CD4-positive, alpha-beta T cell (primary cell): ENCODE measurements at regions of chr15 and their contacts with region 1.

Region 1: GRCh38 chr15:64731012-64731806 is 44.2 kb downstream of the RBPMS2 start:
- DNase-seq: peak; percentile 76 to 94 (median 85)
- ATAC-seq: peak; percentile 80
- H3K4me3 ChIP-seq: no peak overlapping the region
- H3K4me3 Mint-ChIP-seq: no peak overlapping the region
- H3K27ac ChIP-seq: no peak overlapping the region
- H3K27ac Mint-ChIP-seq: no peak overlapping the region
- H3K4me1 ChIP-seq: peaks cover 9% of the 10 kb centered on the region
- H3K4me1 Mint-ChIP-seq: peaks cover 8% of the 10 kb centered on the region
- H3K27me3 ChIP-seq: no peaks in the 10 kb centered on the region
- H3K27me3 Mint-ChIP-seq: peaks cover 9% of the 10 kb centered on the region
- CTCF ChIP-seq: peak; percentile 85

Region 2: DNA sequence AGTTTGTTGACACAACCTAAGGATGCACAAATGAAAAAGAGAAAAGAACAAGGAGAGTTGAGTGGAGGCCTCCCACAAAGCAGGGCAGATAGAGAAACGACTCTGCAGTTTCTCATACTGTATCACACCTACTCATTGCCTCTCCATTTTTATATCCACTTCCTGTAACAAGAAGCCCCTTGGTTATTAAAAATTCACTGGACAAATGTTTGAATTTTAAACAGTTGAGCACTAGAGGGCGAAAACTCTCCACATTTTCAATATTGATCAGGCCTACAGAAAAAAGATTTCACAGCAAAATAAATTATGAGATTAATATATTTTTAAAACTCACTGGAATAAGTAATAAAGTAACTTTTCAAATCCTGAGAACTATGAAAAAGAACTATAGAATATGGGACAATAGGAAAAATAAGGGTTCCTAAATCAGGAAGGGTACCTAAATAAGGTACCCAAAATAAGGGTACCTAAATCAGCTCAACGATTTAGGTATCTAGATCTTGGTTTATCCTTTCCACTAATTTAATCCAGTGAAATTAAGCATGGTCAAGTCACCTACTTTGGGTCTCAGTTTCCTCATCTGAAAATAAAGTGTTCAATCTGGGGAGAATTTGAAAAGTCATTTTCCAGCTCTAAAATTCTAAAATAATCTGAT is 521.4 kb before region 1 on chr15:
- CTCF ChIA-PET with region 1: no interaction called
- POLR2A ChIA-PET with region 1: no interaction called
- intact Hi-C with region 1: loop called in 1 of 2 experiments (anchors 5 kb)
- DNase-seq: peak in 3 of 14 experiments; percentile 19 to 27 (median 27)
- ATAC-seq: no peak
- H3K4me3 ChIP-seq: no peak overlapping the region
- H3K4me3 Mint-ChIP-seq: no peak overlapping the region
- H3K27ac ChIP-seq: no peak overlapping the region
- H3K27ac Mint-ChIP-seq: peak overlapping the region; percentile 7
- H3K4me1 ChIP-seq: no peaks in the 10 kb centered on the region
- H3K4me1 Mint-ChIP-seq: no peaks in the 10 kb centered on the region
- H3K27me3 ChIP-seq: no peaks in the 10 kb centered on the region
- H3K27me3 Mint-ChIP-seq: no peaks in the 10 kb centered on the region
- CTCF ChIP-seq: peak; percentile 43

Region 3: DNA sequence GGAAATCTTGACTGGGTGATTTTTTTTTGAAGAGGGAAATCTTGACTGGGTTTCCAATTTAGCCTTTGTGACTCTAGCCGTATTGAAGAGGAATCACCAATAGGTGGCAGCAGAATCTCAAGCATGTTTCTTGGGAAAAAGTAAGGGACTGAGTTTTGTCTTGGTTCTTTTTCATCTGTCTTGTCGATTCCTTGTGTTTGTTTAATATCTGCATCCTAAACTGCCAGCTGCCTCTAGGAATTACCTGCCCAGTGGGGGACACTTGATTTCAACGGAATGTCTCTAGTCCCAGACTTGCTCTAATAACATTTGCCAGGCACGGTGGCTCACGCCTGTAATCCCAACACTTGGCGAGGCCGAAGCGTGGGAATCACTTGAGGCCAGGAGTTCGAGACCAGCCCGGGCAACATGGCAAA is 45.0 kb before region 1 on chr15:
- CTCF ChIA-PET with region 1: interaction called, 42 read pairs
- POLR2A ChIA-PET with region 1: interaction called, 3 read pairs
- intact Hi-C with region 1: loop called (anchors 1 kb)
- DNase-seq: peak in 5 of 14 experiments; percentile 12 to 73 (median 53)
- ATAC-seq: peak; percentile 48
- H3K4me3 ChIP-seq: no peak overlapping the region
- H3K4me3 Mint-ChIP-seq: no peak overlapping the region
- H3K27ac ChIP-seq: no peak overlapping the region
- H3K27ac Mint-ChIP-seq: no peak overlapping the region
- H3K4me1 ChIP-seq: no peaks in the 10 kb centered on the region
- H3K4me1 Mint-ChIP-seq: peaks cover 6% of the 10 kb centered on the region
- H3K27me3 ChIP-seq: no peaks in the 10 kb centered on the region
- H3K27me3 Mint-ChIP-seq: no peaks in the 10 kb centered on the region
- CTCF ChIP-seq: peak; percentile 79

Region 4: GRCh38 chr15:64717735-64718495 is 13.3 kb before region 1 on chr15:
- CTCF ChIA-PET with region 1: interaction called, 11 read pairs
- POLR2A ChIA-PET with region 1: interaction called, 4 read pairs
- intact Hi-C with region 1: no loop called
- DNase-seq: peak in 8 of 14 experiments; percentile 11 to 59 (median 28)
- ATAC-seq: peak; percentile 64
- H3K4me3 ChIP-seq: no peak overlapping the region
- H3K4me3 Mint-ChIP-seq: no peak overlapping the region
- H3K27ac ChIP-seq: peak overlapping the region; percentile 15 to 38
- H3K27ac Mint-ChIP-seq: peak overlapping the region; percentile 74
- H3K4me1 ChIP-seq: peaks cover 18% of the 10 kb centered on the region
- H3K4me1 Mint-ChIP-seq: peaks cover 24% of the 10 kb centered on the region
- H3K27me3 ChIP-seq: no peaks in the 10 kb centered on the region
- H3K27me3 Mint-ChIP-seq: no peaks in the 10 kb centered on the region
- CTCF ChIP-seq: no peak

Region 5: DNA sequence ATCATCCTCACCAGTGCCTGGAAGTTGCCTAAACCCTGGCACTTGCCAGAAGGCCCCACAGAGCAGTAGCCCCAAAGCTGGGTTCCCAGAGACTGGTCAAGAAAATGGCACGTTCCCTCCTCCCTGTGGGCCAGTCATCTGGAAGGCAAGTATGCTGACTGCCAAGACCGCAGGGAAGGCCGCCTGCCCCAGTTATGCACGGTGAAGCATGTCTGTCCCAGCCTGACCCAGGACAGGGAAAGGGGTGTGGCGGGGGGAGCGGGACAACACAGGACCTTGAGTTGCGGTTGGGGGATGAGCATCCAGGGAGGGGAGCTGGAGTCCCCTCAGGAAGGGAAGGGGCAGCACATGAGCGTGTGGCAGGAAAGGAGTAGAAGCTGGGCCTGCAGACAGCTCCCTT is 11.2 kb after region 1 on chr15:
- CTCF ChIA-PET with region 1: no interaction called
- POLR2A ChIA-PET with region 1: no interaction called
- intact Hi-C with region 1: no loop called
- DNase-seq: no peak
- ATAC-seq: no peak
- H3K4me3 ChIP-seq: no peak overlapping the region
- H3K4me3 Mint-ChIP-seq: no peak overlapping the region
- H3K27ac ChIP-seq: no peak overlapping the region
- H3K27ac Mint-ChIP-seq: no peak overlapping the region
- H3K4me1 ChIP-seq: no peaks in the 10 kb centered on the region
- H3K4me1 Mint-ChIP-seq: no peaks in the 10 kb centered on the region
- H3K27me3 ChIP-seq: peaks cover 0 to 3% of the 10 kb centered on the region in 2 experiments
- H3K27me3 Mint-ChIP-seq: peaks cover 5% of the 10 kb centered on the region
- CTCF ChIP-seq: no peak

Region 6: GRCh38 chr15:64905119-64905831 is 174.1 kb after region 1 on chr15:
- CTCF ChIA-PET with region 1: interaction called, 38 read pairs
- POLR2A ChIA-PET with region 1: interaction called, 3 read pairs
- intact Hi-C with region 1: loop called (anchors 1 kb)
- DNase-seq: peak; percentile 63 to 88 (median 74)
- ATAC-seq: peak; percentile 74
- H3K4me3 ChIP-seq: peak overlapping the region; percentile 24
- H3K4me3 Mint-ChIP-seq: peak overlapping the region; percentile 79
- H3K27ac ChIP-seq: no peak overlapping the region
- H3K27ac Mint-ChIP-seq: no peak overlapping the region
- H3K4me1 ChIP-seq: peaks cover 36% of the 10 kb centered on the region
- H3K4me1 Mint-ChIP-seq: peaks cover 46% of the 10 kb centered on the region
- H3K27me3 ChIP-seq: peaks cover 0 to 3% of the 10 kb centered on the region in 2 experiments
- H3K27me3 Mint-ChIP-seq: peaks cover 16% of the 10 kb centered on the region
- CTCF ChIP-seq: peak; percentile 94

Region 7: DNA sequence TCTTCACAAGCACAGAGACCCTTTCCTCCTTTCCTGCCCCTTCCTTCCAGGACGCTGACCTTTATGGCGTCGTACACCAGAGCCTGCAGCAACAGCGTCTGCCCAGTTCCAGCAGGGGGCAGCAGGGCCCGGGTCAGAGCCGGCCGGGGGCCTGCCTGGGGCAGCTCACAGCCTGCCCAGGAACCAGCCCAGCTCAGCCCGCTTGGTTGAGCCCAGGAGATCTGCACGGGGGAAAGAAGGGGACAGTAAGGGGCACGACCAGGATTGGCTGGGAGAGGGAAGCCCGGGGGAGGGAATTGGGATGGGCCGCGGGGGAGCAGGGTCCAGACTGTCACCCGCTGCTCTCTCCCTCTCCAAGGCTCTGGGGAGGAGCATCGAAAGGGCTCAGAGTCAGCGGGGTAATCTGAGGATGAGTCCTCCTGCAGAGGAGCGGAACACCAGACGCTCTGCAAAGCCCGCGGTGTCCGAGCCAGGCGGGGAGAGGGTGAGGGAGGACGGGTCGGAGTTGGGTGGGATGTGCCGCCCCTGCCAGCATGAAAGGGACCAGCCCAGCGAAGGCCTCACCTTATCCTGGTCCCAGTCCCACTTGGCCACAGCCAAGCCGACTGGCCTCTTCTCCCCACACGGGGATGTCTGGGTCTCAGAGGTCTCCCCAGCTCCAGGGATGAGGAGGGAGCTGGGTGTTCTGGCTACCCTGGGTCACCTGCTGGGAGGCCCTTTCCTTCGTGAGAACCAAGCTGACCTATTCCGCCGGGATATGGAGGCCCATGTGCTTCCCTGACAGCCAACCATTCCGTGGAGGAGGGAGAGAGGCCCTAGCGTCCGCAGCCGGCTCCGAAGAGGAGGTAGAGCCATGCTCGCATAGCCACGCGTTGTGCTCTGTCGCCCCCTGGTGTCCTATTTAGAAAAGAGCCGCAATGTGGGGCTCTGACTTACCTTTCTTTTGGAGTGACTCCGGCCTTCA is 654.0 kb after region 1 on chr15:
- CTCF ChIA-PET with region 1: no interaction called
- POLR2A ChIA-PET with region 1: no interaction called
- intact Hi-C with region 1: loop called in 1 of 2 experiments (anchors 5 kb)
- DNase-seq: peak; percentile 72 to 90 (median 81)
- ATAC-seq: peak; percentile 93
- H3K4me3 ChIP-seq: peak overlapping the region; percentile 83
- H3K4me3 Mint-ChIP-seq: peak overlapping the region; percentile 95
- H3K27ac ChIP-seq: peak overlapping the region in 1 of 2 donors; percentile 15
- H3K27ac Mint-ChIP-seq: no peak overlapping the region
- H3K4me1 ChIP-seq: peaks cover 17% of the 10 kb centered on the region
- H3K4me1 Mint-ChIP-seq: peaks cover 4% of the 10 kb centered on the region
- H3K27me3 ChIP-seq: peaks cover 3 to 5% of the 10 kb centered on the region in 2 experiments
- H3K27me3 Mint-ChIP-seq: peaks cover 29% of the 10 kb centered on the region
- CTCF ChIP-seq: peak; percentile 75